Caco-2 (cell line): ENCODE measurements at regions of chr13 and their contacts with region 1.

Region 1: GRCh38 chr13:73248711-73249578 is 190.1 kb downstream of the KLF5 start:
- DNase-seq: peak; percentile 67 to 68
- H3K4me3 ChIP-seq: no peak overlapping the region
- H3K4me3 Mint-ChIP-seq: peak overlapping the region; percentile 58
- H3K27ac Mint-ChIP-seq: peak overlapping the region; percentile 97
- H3K4me1 ChIP-seq: peaks cover 52% of the 10 kb centered on the region
- H3K4me1 Mint-ChIP-seq: peaks cover 58% of the 10 kb centered on the region
- H3K27me3 ChIP-seq: no peaks in the 10 kb centered on the region
- H3K27me3 Mint-ChIP-seq: no peaks in the 10 kb centered on the region
- CTCF ChIP-seq: no peak

Region 2: GRCh38 chr13:73198991-73199411 is 49.9 kb before region 1 on chr13:
- CTCF ChIA-PET with region 1: no interaction called
- POLR2A ChIA-PET with region 1: no interaction called
- intact Hi-C with region 1: loop called (anchors 2 kb)
- DNase-seq: no peak
- H3K4me3 ChIP-seq: no peak overlapping the region
- H3K4me3 Mint-ChIP-seq: no peak overlapping the region
- H3K27ac Mint-ChIP-seq: no peak overlapping the region
- H3K4me1 ChIP-seq: peaks cover 27% of the 10 kb centered on the region
- H3K4me1 Mint-ChIP-seq: peaks cover 11% of the 10 kb centered on the region
- H3K27me3 ChIP-seq: no peaks in the 10 kb centered on the region
- H3K27me3 Mint-ChIP-seq: no peaks in the 10 kb centered on the region
- CTCF ChIP-seq: no peak

Region 3: GRCh38 chr13:73261739-73262216 is 12.8 kb after region 1 on chr13:
- CTCF ChIA-PET with region 1: no interaction called
- POLR2A ChIA-PET with region 1: interaction called, 5 read pairs
- intact Hi-C with region 1: loop called (anchors 1 kb)
- DNase-seq: peak; percentile 73 to 81
- H3K4me3 ChIP-seq: no peak overlapping the region
- H3K4me3 Mint-ChIP-seq: no peak overlapping the region
- H3K27ac Mint-ChIP-seq: peak overlapping the region; percentile 89
- H3K4me1 ChIP-seq: peaks cover 35% of the 10 kb centered on the region
- H3K4me1 Mint-ChIP-seq: peaks cover 54% of the 10 kb centered on the region
- H3K27me3 ChIP-seq: no peaks in the 10 kb centered on the region
- H3K27me3 Mint-ChIP-seq: no peaks in the 10 kb centered on the region
- CTCF ChIP-seq: no peak

Region 4: GRCh38 chr13:73325711-73326558 is 77.0 kb after region 1 on chr13:
- CTCF ChIA-PET with region 1: no interaction called
- POLR2A ChIA-PET with region 1: no interaction called
- intact Hi-C with region 1: loop called (anchors 1 kb)
- DNase-seq: peak; percentile 64 to 78
- H3K4me3 ChIP-seq: no peak overlapping the region
- H3K4me3 Mint-ChIP-seq: peak overlapping the region; percentile 65
- H3K27ac Mint-ChIP-seq: peak overlapping the region; percentile 75
- H3K4me1 ChIP-seq: peaks cover 42% of the 10 kb centered on the region
- H3K4me1 Mint-ChIP-seq: peaks cover 30% of the 10 kb centered on the region
- H3K27me3 ChIP-seq: no peaks in the 10 kb centered on the region
- H3K27me3 Mint-ChIP-seq: no peaks in the 10 kb centered on the region
- CTCF ChIP-seq: no peak

Region 5: GRCh38 chr13:73417015-73417623 is 168.2 kb after region 1 on chr13:
- CTCF ChIA-PET with region 1: interaction called, 5 read pairs
- POLR2A ChIA-PET with region 1: no interaction called
- intact Hi-C with region 1: loop called (anchors 1 kb)
- DNase-seq: peak in 1 of 2 experiments; percentile 55
- H3K4me3 ChIP-seq: no peak overlapping the region
- H3K4me3 Mint-ChIP-seq: no peak overlapping the region
- H3K27ac Mint-ChIP-seq: no peak overlapping the region
- H3K4me1 ChIP-seq: peaks cover 19% of the 10 kb centered on the region
- H3K4me1 Mint-ChIP-seq: peaks cover 15% of the 10 kb centered on the region
- H3K27me3 ChIP-seq: no peaks in the 10 kb centered on the region
- H3K27me3 Mint-ChIP-seq: no peaks in the 10 kb centered on the region
- CTCF ChIP-seq: peak; percentile 38 to 45

Region 6: DNA sequence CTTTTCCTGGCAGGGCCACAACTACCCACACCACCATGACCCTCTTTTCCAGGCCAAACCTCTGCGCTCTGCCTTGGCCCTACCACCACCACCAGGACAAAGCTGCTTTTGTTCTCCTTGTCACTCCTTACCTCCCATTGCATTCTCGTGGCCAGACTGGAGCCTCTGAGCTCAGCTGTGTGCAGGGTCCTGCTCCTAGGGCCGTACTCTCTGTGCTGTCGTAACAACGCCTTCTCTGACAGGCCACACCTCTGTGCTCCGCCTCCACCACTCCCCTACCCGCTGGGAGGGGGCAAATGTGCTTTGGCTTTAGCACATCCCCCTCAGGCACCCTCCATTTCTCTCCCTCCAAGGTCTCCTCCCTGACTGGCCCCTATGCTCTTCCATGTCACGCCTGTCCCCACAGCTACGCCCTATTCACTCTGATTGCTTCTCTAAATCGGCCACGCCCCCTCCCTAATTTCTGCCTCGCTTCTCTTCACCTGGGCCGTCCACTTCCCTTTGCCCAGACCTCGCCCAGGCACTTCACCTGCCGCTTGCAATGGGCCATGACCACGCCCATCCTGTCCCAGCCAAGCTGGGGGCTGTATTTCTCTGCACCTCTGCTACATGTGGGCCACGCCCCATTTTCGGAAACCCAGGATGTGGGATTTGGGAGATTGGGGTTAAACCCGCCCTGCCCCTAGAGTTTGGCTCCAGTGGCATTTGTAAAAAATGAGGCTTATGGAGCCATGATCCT is 412.9 kb after region 1 on chr13:
- CTCF ChIA-PET with region 1: no interaction called
- POLR2A ChIA-PET with region 1: no interaction called
- intact Hi-C with region 1: no loop called
- DNase-seq: no peak
- H3K4me3 ChIP-seq: no peak overlapping the region
- H3K4me3 Mint-ChIP-seq: no peak overlapping the region
- H3K27ac Mint-ChIP-seq: no peak overlapping the region
- H3K4me1 ChIP-seq: no peaks in the 10 kb centered on the region
- H3K4me1 Mint-ChIP-seq: peaks cover 5% of the 10 kb centered on the region
- H3K27me3 ChIP-seq: no peaks in the 10 kb centered on the region
- H3K27me3 Mint-ChIP-seq: no peaks in the 10 kb centered on the region
- CTCF ChIP-seq: no peak